ENCODE measurements at regions of chr14 and their contacts with region 1.

Region 1: GRCh38 chr14:63543000-63543825 is at the start of gene PPP2R5E:
- DNase-seq: peak; percentile 98
- H3K4me3 ChIP-seq: peak within 1 kb of the TSS; percentile 92
- CTCF ChIP-seq: no peak

Region 2: GRCh38 chr14:63432228-63432627 is 111.0 kb before region 1 on chr14:
- in situ Hi-C with region 1: loop called (anchors 5 kb)
- DNase-seq: no peak
- H3K4me3 ChIP-seq: no peak overlapping the region
- CTCF ChIP-seq: no peak

Region 3: DNA sequence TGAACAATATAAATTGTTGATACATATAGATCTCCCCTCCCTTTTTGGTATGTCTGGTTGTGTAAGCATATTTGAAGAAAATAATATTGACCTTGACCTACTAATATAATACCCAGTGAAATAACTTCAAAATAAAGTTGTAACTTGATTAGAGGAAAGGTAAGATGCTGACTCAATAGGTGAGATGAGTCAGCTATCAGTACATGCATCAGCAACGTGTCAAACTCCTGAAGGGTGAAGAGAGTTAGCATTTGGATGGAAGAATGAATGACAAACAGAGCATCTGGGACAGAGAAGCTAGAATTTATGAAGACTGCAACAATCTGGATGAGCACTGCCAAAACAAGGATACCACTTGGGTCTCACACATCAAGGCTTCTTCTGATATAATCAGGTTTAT is 74.9 kb before region 1 on chr14:
- in situ Hi-C with region 1: loop called (anchors 5 kb)
- DNase-seq: no peak
- H3K4me3 ChIP-seq: no peak overlapping the region
- CTCF ChIP-seq: no peak

Region 4: DNA sequence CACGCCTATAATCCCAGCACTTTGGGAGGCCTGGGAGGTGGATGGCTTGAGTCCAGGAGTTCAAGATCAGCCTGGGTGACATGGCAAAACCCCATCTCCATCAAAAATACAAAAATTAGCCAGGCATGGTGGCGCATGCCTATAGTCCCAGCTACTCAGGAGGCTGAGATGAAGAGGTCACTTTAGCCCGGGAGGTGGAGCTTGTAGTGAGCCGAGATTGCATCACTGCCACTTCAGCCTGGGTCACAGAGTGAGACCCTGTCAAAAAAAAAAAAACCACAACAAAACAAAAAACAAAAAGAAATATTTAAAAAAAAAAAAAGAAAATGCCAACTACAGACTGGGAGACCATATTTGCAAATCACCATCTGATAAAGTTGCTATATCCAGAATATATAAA is 81.0 kb after region 1 on chr14:
- in situ Hi-C with region 1: no loop called
- DNase-seq: no peak
- H3K4me3 ChIP-seq: no peak overlapping the region
- CTCF ChIP-seq: no peak

Measured in astrocyte of the cerebellum (primary cell).